A673 (cell line): ENCODE measurements at regions of chr5 and their contacts with region 1.

Region 1: DNA sequence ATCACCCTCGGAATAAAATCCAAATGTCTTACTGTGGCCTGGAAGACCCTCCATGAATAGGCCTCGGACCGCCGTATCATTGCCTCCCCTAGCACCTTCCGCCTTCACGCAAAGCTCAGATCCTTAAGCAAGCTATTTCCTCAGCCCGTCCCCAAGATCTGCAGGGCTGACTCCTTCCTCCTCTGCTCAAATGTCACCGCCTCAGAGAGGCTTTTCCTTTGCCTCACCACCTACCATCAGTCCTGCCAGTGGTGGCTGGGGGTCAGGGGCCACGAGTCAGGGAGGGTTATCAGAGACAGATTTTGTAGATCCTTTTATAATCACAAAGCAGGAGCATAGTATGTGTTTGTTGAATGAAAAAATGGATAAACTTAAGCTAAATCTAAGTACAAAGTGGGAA is 74.4 kb upstream of the KIF2A start:
- DNase-seq: no peak
- H3K4me3 ChIP-seq: no peak overlapping the region
- H3K27ac ChIP-seq: no peak overlapping the region
- H3K4me1 ChIP-seq: no peaks in the 10 kb centered on the region
- H3K27me3 ChIP-seq: no peaks in the 10 kb centered on the region
- CTCF ChIP-seq: no peak

Region 2: GRCh38 chr5:62190173-62190572 is 41.4 kb before region 1 on chr5:
- CTCF ChIA-PET with region 1: no interaction called
- POLR2A ChIA-PET with region 1: no interaction called
- intact Hi-C with region 1: no loop called
- DNase-seq: no peak
- H3K4me3 ChIP-seq: no peak overlapping the region
- H3K27ac ChIP-seq: no peak overlapping the region
- H3K4me1 ChIP-seq: no peaks in the 10 kb centered on the region
- H3K27me3 ChIP-seq: no peaks in the 10 kb centered on the region
- CTCF ChIP-seq: no peak

Region 3: DNA sequence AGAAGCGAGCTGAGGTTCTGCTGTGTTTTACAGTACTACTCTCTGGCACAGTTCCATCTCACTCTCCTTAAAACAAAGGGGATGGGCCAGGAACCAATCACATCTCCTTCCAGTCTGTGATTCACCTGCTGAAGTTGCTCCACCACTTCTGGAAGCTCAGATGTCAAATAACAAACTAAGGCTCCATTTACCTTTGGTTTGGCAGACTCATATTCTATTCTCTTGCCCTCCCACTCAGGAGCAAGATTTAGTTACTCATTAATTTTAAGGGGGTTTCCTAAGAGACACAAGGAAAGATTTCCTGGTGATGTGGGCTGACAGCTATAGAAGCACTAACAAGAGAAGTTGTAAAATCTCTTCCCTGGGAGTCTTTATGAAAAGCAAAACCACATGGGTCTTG is 36.7 kb after region 1 on chr5:
- CTCF ChIA-PET with region 1: no interaction called
- POLR2A ChIA-PET with region 1: no interaction called
- intact Hi-C with region 1: no loop called
- DNase-seq: peak; percentile 17
- H3K4me3 ChIP-seq: no peak overlapping the region
- H3K27ac ChIP-seq: no peak overlapping the region
- H3K4me1 ChIP-seq: no peaks in the 10 kb centered on the region
- H3K27me3 ChIP-seq: no peaks in the 10 kb centered on the region
- CTCF ChIP-seq: no peak

Region 4: DNA sequence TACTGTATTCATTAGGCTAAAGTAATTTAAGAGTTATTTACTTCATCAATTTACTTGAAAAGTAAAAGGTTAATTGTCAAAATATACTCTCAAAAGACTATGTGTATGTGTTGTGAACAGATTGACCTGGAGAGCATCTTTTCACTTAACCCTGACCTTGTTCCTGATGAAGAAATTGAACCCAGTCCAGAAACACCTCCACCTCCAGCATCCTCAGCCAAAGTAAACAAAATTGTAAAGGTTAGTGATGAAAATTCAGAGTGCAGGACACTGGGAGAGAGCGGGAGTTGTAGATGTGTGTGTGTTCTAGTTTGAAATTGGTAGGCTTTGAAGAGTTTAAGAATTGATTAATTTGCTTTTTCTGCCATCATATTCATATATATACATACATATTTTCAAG is 116.4 kb after region 1 on chr5:
- CTCF ChIA-PET with region 1: no interaction called
- POLR2A ChIA-PET with region 1: no interaction called
- intact Hi-C with region 1: loop called (anchors 5 kb)
- DNase-seq: no peak
- H3K4me3 ChIP-seq: no peak overlapping the region
- H3K27ac ChIP-seq: no peak overlapping the region
- H3K4me1 ChIP-seq: no peaks in the 10 kb centered on the region
- H3K27me3 ChIP-seq: no peaks in the 10 kb centered on the region
- CTCF ChIP-seq: no peak